Activated CD4-positive, alpha-beta memory T cell treated with anti-CD3 and anti-CD28 coated beads, Interleukin-2, amount 10 ng/mL, durations not matched to agents 7 days and 5 days (primary cell): ENCODE measurements at regions of chr14 and their contacts with region 1.

Region 1: GRCh38 chr14:99320105-99320572 is 48.1 kb upstream of the BCL11B start:
- DNase-seq: peak; percentile 79
- H3K4me3 Mint-ChIP-seq: no peak overlapping the region
- H3K27ac Mint-ChIP-seq: no peak overlapping the region
- H3K4me1 Mint-ChIP-seq: peaks cover 14% of the 10 kb centered on the region
- H3K27me3 Mint-ChIP-seq: no peaks in the 10 kb centered on the region

Region 2: DNA sequence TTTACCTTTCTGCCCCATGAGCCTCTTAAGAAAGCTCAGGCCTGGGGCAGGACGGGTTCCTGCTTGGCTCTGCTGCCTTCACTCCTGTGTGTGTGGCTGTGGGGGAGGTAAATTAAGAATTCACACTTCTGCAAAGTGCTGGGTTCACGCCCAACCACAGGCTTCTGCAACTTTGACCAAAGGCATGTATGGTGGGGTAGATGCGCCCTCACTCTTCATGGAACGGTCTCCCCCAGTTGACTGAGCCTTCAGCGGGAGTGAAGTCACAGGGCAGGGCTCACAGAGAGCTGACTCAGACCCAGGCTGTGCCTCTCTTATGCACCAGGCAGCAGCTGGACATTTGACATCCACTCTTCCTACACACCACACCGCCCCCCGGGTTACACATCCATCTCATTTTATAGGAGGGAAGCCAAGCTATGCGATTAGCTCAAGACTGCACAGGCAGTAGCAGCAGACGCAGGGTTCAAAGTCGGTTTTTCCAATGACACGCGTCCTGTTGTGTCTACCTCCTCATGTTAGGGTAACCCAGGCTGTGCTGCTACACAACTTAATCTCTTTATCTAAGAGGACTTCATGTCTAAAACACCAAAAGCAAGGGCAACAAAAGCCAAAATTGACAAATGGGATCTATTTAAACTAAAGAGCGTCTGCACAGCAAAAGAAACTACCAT is 32.7 kb before region 1 on chr14:
- CTCF ChIA-PET with region 1: interaction called, 10 read pairs
- POLR2A ChIA-PET with region 1: interaction called, 3 read pairs
- DNase-seq: peak; percentile 39
- H3K4me3 Mint-ChIP-seq: peak overlapping the region; percentile 69
- H3K27ac Mint-ChIP-seq: peak overlapping the region; percentile 71
- H3K4me1 Mint-ChIP-seq: peaks cover 24% of the 10 kb centered on the region
- H3K27me3 Mint-ChIP-seq: no peaks in the 10 kb centered on the region

Region 3: DNA sequence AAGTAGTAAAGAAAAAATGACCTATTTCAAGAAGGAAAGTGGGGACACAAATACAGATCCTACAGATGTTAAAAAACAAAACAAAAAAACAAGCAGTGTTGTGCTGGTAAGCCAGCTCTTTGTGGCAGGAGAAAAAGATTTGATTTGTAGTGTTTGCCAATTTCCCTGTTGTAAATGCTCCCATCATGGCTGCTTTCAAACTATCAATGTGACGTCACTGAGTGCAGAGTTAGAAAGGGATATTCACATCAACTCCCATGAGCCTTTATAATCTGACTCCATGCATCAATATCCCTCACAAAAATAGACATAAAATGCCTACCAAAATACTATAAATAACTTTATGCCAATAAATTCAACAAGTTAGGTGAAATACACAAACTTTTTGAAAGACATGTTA is 15.9 kb before region 1 on chr14:
- CTCF ChIA-PET with region 1: interaction called, 23 read pairs
- POLR2A ChIA-PET with region 1: no interaction called
- DNase-seq: no peak
- H3K4me3 Mint-ChIP-seq: no peak overlapping the region
- H3K27ac Mint-ChIP-seq: no peak overlapping the region
- H3K4me1 Mint-ChIP-seq: no peaks in the 10 kb centered on the region
- H3K27me3 Mint-ChIP-seq: peaks cover 29% of the 10 kb centered on the region

Region 4: GRCh38 chr14:99342204-99342603 is 22.1 kb after region 1 on chr14:
- CTCF ChIA-PET with region 1: interaction called, 11 read pairs
- POLR2A ChIA-PET with region 1: no interaction called
- DNase-seq: no peak
- H3K4me3 Mint-ChIP-seq: no peak overlapping the region
- H3K27ac Mint-ChIP-seq: peak overlapping the region; percentile 31
- H3K4me1 Mint-ChIP-seq: peaks cover 2% of the 10 kb centered on the region
- H3K27me3 Mint-ChIP-seq: peaks cover 14% of the 10 kb centered on the region